ENCODE measurements at regions of chr1 and their contacts with region 1.

Region 1: DNA sequence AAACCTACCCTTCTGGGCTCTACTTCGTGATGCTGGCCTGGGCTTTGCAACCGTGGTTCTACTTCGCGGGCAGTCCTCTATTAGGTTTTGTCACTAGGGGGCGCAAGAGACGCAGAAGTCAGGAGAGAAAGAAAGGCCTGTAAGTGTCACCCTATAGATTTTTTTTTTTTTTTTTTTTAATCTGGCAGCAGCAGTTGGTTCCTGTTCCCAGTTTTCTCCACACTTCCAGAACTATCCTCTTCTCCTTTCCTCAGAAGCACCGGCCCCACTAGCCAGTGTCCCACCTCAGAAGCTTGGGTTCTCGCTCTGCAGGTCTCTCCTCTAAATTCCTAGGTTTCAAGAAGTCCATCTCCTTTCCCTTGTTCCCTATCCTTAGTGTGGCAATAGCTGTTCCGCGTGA is 9.1 kb upstream of the LCE2D start:
- DNase-seq: peak; percentile 71
- ATAC-seq: peak; percentile 61
- H3K4me3 Mint-ChIP-seq: no peak overlapping the region
- H3K27ac Mint-ChIP-seq: no peak overlapping the region
- H3K4me1 Mint-ChIP-seq: peaks cover 3% of the 10 kb centered on the region
- H3K27me3 Mint-ChIP-seq: peaks cover 22% of the 10 kb centered on the region

Region 2: GRCh38 chr1:152643945-152644344 is 10.2 kb before region 1 on chr1:
- CTCF ChIA-PET with region 1: interaction called, 12 read pairs
- POLR2A ChIA-PET with region 1: no interaction called
- DNase-seq: no peak
- ATAC-seq: no peak
- H3K4me3 Mint-ChIP-seq: no peak overlapping the region
- H3K27ac Mint-ChIP-seq: no peak overlapping the region
- H3K4me1 Mint-ChIP-seq: no peaks in the 10 kb centered on the region
- H3K27me3 Mint-ChIP-seq: peaks cover 4% of the 10 kb centered on the region